Activated naive CD4-positive, alpha-beta T cell treated with anti-CD3 and anti-CD28 coated beads for 36 hours (primary cell): ENCODE measurements at regions of chr22 and their contacts with region 1.

Region 1: GRCh38 chr22:30634471-30635233 is 929 bp upstream of the SLC35E4 start:
- DNase-seq: peak; percentile 96
- H3K4me3 Mint-ChIP-seq: peak overlapping the region; percentile 75
- H3K27ac Mint-ChIP-seq: peak overlapping the region; percentile 67
- H3K4me1 Mint-ChIP-seq: peaks cover 19% of the 10 kb centered on the region
- H3K27me3 Mint-ChIP-seq: no peaks in the 10 kb centered on the region

Region 2: GRCh38 chr22:30183861-30184278 is 450.8 kb before region 1 on chr22:
- CTCF ChIA-PET with region 1: no interaction called
- intact Hi-C with region 1: no loop called
- DNase-seq: no peak
- H3K4me3 Mint-ChIP-seq: no peak overlapping the region
- H3K27ac Mint-ChIP-seq: peak overlapping the region; percentile 93
- H3K4me1 Mint-ChIP-seq: peaks cover 87% of the 10 kb centered on the region
- H3K27me3 Mint-ChIP-seq: no peaks in the 10 kb centered on the region

Region 3: DNA sequence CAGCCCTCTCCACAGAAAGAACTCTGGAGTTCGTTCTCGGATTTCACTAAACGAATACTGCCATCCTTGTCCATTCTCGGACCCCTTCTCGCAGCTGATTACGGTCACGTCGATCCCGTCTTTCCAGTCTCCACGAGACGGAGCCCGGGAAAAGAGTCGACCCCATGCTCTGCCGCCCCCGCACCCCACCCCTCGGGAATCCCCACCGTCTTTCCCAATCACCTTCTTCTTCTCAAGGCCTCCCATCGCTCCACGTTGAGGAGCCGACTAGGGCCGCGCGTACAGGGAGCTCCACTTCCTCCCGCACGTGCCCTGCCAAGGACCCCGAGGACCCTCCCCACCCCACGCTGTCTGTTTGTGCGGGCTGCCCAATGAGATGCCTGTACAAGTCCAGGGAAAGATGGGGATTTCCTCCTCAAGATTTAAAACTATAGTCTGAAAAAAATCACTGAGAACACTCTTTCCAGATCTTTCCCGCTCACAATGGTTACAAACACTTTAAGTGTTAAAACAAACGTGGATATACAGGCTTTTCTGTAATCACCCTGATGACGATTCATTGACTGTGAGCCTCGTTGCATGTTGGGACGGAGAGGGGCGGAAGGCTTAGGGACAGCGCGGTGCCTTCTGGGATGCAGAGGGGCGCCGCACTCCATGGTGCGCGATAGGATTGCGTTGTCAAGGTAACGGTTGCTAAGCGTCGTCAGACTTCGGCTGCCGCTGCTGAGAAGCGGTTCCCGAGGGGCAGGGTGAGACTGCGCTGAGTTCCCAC is 42.9 kb before region 1 on chr22 and contains the start of gene PES1:
- CTCF ChIA-PET with region 1: interaction called, 3 read pairs
- intact Hi-C with region 1: loop called (anchors 1 kb)
- DNase-seq: peak; percentile 96
- H3K4me3 Mint-ChIP-seq: no peak within 1 kb of the TSS
- H3K27ac Mint-ChIP-seq: no peak within 1 kb of the TSS
- H3K4me1 Mint-ChIP-seq: peaks cover 11% of the 10 kb centered on the region
- H3K27me3 Mint-ChIP-seq: no peaks in the 10 kb centered on the region
- total RNA-seq, gene PES1: 92.8 to 96.7 TPM

Region 4: DNA sequence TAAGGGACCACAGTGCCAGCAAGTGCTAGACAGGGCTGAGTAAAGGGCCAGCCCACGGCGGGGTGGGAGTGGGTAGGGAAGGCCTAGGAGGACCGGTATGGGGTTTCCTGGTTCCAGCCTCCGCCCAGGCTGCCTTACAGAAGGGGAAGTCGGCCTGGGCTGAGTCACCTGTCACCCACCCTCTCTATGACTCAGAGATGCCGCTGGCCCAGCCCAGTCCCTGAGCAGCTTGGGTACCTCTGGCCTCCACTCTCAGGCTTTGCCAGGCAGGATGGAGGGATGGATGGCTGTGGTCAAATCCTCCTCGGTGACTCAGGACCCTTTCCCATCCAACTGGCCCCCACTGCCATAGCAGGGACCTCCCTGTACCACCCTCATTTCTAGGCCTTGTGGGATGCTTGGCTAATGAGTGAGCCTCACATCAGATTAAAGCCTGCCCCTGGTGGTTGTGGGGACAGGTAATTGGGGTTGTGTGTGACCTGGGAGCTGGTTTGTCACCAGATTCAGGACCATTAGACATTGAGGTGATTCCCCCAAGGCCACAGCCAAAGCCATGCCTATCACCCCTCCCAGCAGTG is 14.9 kb after region 1 on chr22:
- CTCF ChIA-PET with region 1: interaction called, 23 read pairs
- intact Hi-C with region 1: loop called (anchors 1 kb)
- DNase-seq: peak; percentile 95
- H3K4me3 Mint-ChIP-seq: no peak overlapping the region
- H3K27ac Mint-ChIP-seq: peak overlapping the region; percentile 75
- H3K4me1 Mint-ChIP-seq: peaks cover 28% of the 10 kb centered on the region
- H3K27me3 Mint-ChIP-seq: no peaks in the 10 kb centered on the region

Region 5: GRCh38 chr22:30694171-30694639 is 59.6 kb after region 1 on chr22:
- CTCF ChIA-PET with region 1: no interaction called
- intact Hi-C with region 1: loop called (anchors 2 kb)
- DNase-seq: peak; percentile 64
- H3K4me3 Mint-ChIP-seq: peak overlapping the region; percentile 87
- H3K27ac Mint-ChIP-seq: no peak overlapping the region
- H3K4me1 Mint-ChIP-seq: peaks cover 11% of the 10 kb centered on the region
- H3K27me3 Mint-ChIP-seq: peaks cover 12% of the 10 kb centered on the region

Region 6: GRCh38 chr22:30754971-30755756 is 120.5 kb after region 1 on chr22:
- CTCF ChIA-PET with region 1: interaction called, 156 read pairs
- intact Hi-C with region 1: loop called (anchors 1 kb)
- DNase-seq: peak; percentile 82
- H3K4me3 Mint-ChIP-seq: no peak overlapping the region
- H3K27ac Mint-ChIP-seq: no peak overlapping the region
- H3K4me1 Mint-ChIP-seq: no peaks in the 10 kb centered on the region
- H3K27me3 Mint-ChIP-seq: peaks cover 3% of the 10 kb centered on the region

Region 7: DNA sequence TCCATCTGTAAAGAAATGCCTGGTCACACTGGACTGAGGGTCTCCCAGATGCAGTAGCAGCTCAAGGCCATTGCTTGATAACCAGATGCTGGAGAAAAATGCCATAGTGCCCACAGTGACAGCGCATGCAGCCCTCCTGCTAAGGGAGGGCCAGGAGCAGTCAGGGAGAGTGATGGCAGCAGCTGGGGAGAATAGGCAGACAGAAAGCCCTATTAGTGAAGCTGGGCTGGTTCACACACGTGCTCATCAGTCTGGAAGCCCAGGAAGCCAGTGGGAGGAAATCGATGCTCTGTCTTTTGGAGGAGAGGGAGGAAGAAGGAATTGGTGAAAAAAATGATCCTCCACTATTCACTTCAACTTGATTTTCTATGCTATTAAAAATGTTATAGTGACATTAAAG is 142.9 kb after region 1 on chr22:
- CTCF ChIA-PET with region 1: no interaction called
- intact Hi-C with region 1: no loop called
- DNase-seq: no peak
- H3K4me3 Mint-ChIP-seq: no peak overlapping the region
- H3K27ac Mint-ChIP-seq: peak overlapping the region; percentile 60
- H3K4me1 Mint-ChIP-seq: no peaks in the 10 kb centered on the region
- H3K27me3 Mint-ChIP-seq: no peaks in the 10 kb centered on the region

Region 8: DNA sequence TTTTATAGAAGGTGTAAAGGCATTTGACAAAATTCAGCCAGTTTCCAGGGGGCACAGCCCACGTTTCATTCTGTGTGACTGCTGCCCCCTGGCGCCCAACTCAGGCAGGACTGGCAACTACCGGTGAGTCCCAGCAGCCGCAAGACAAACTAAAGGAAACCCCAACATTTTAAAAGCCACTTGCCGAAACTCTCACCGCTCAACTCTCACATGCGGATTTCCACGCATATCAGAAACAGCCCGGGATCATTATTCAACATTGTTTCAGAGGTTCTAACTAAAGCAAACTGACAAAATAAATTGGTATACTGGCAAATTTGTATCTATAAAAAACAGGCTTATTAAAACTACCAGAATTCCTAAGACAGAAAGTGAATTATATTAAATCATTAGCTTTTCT is 285.8 kb after region 1 on chr22:
- CTCF ChIA-PET with region 1: interaction called, 10 read pairs
- intact Hi-C with region 1: loop called (anchors 1 kb)
- DNase-seq: peak; percentile 90
- H3K4me3 Mint-ChIP-seq: peak overlapping the region; percentile 56
- H3K27ac Mint-ChIP-seq: no peak overlapping the region
- H3K4me1 Mint-ChIP-seq: peaks cover 7% of the 10 kb centered on the region
- H3K27me3 Mint-ChIP-seq: no peaks in the 10 kb centered on the region